ENCODE measurements at regions of chr7 and their contacts with region 1.

Region 1: GRCh38 chr7:142459551-142459963 is 201.7 kb upstream of the PRSS58 start:
- DNase-seq: peak; percentile 90
- ATAC-seq: peak; percentile 50
- H3K4me3 ChIP-seq: no peak overlapping the region
- H3K27ac ChIP-seq: no peak overlapping the region
- H3K4me1 ChIP-seq: peaks cover 22% of the 10 kb centered on the region
- H3K27me3 ChIP-seq: no peaks in the 10 kb centered on the region
- CTCF ChIP-seq: peak; percentile 78
- POLR2A ChIP-seq: no peak
- RAD21 ChIP-seq: peak; percentile 78

Region 2: GRCh38 chr7:142088022-142088714 is 371.4 kb before region 1 on chr7:
- CTCF ChIA-PET with region 1: no interaction called
- POLR2A ChIA-PET with region 1: no interaction called
- dilution Hi-C with region 1: no loop called
- in situ Hi-C with region 1: no loop called
- intact Hi-C with region 1: no loop called
- DNase-seq: no peak
- ATAC-seq: no peak
- H3K4me3 ChIP-seq: no peak overlapping the region
- H3K27ac ChIP-seq: no peak overlapping the region
- H3K4me1 ChIP-seq: no peaks in the 10 kb centered on the region
- H3K27me3 ChIP-seq: no peaks in the 10 kb centered on the region
- CTCF ChIP-seq: no peak
- POLR2A ChIP-seq: no peak
- RAD21 ChIP-seq: no peak

Region 3: DNA sequence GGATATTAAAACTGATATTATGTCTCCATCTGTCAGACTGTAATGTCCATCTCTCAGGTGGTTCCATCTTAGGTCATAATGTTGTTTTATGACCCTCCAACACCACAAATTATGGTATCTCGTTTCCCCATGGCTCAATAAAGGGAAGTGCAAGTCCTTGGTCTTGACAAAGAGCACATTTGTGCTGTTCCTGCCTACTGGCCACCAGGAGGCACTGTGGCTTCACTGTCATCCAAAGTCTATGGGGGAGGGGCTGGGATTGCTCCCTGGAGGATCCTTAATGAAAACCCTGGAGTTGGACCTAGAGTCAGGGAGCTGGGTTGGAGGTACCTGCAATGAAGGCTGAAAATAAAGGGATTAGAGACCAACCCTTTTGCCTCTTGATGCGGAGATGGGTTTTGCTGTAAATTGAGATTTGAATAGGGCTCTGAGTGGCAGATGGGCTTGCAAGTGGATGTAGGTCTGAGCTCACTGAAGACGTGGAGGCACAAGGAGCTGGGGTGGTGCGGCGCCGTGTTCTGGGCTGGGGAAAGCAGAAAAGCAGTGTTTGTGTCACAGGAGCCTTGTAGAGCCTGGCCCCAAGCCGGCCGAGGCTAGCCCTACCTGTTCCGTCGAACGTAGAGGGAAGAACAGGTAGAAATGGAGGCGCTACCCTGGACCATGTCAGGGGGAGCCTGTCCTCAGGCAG is 21.2 kb before region 1 on chr7:
- CTCF ChIA-PET with region 1: interaction called, 16 read pairs
- POLR2A ChIA-PET with region 1: interaction called, 5 read pairs
- dilution Hi-C with region 1: no loop called
- in situ Hi-C with region 1: no loop called
- intact Hi-C with region 1: no loop called
- DNase-seq: peak; percentile 64
- ATAC-seq: peak; percentile 33; the same call in 1 of the 2 replicates
- H3K4me3 ChIP-seq: no peak overlapping the region
- H3K27ac ChIP-seq: no peak overlapping the region
- H3K4me1 ChIP-seq: peaks cover 12% of the 10 kb centered on the region
- H3K27me3 ChIP-seq: no peaks in the 10 kb centered on the region
- CTCF ChIP-seq: peak; percentile 84
- POLR2A ChIP-seq: no peak
- RAD21 ChIP-seq: peak; percentile 73

Region 4: DNA sequence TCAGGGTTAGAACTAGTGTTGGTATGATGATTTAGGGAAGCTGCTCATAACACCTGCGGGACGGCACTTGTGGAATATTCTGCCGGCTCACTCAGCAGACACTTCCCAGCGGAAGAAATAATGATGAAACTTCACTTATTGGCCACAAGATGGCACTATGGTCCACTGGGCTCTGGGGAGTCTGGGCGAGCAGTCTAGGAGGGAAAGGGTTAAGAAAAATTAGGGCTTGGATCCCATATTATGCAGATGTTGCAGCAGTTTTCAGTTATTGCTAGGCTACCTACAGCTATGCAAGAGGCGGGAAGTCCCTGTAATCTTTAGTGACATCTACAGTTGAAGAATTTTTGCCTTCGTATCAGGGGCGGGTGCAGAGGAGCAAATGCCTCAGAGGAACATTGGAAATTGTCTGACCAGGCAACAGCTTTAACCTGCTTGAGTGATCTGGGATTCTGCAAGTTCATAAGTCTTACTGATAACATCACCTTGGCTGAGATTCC is 37.0 kb after region 1 on chr7:
- CTCF ChIA-PET with region 1: interaction called, 13 read pairs
- POLR2A ChIA-PET with region 1: no interaction called
- dilution Hi-C with region 1: no loop called
- in situ Hi-C with region 1: no loop called
- intact Hi-C with region 1: no loop called
- DNase-seq: peak; percentile 54
- ATAC-seq: peak; percentile 50
- H3K4me3 ChIP-seq: no peak overlapping the region
- H3K27ac ChIP-seq: no peak overlapping the region
- H3K4me1 ChIP-seq: peaks cover 8% of the 10 kb centered on the region
- H3K27me3 ChIP-seq: 0 out of 2 replicates have a peak, but pooled peaks cover 1% of the 10 kb centered on the region
- CTCF ChIP-seq: peak; percentile 68
- POLR2A ChIP-seq: no peak
- RAD21 ChIP-seq: peak; percentile 53

Region 5: DNA sequence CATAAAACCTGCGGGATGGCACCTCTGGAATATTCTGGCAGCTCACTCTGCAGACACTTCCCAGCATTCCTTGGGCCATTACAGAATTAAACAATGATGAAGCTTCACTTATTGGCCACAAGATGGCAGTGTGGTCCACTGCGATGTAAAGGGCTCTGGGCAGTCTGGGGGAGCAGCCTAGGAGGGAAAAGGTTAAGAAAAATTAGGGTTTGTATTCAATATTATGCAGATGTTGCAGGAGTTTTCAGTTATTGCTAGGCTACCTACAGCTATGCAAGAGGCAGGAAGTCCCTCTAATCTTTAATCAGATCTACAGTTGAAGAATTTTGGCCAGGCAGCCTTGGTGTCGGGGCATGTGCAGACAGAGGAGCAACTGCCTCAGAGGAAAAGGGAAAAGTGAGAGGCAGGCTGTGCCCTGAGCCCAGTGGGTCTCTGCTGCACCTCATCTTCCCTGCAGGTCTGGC is 56.5 kb after region 1 on chr7:
- CTCF ChIA-PET with region 1: interaction called, 7 read pairs
- POLR2A ChIA-PET with region 1: no interaction called
- dilution Hi-C with region 1: no loop called
- in situ Hi-C with region 1: no loop called
- intact Hi-C with region 1: loop called (anchors 5 kb)
- DNase-seq: peak; percentile 72
- ATAC-seq: peak; percentile 93
- H3K4me3 ChIP-seq: no peak overlapping the region
- H3K27ac ChIP-seq: no peak overlapping the region
- H3K4me1 ChIP-seq: no peaks in the 10 kb centered on the region
- H3K27me3 ChIP-seq: peaks cover 4% of the 10 kb centered on the region
- CTCF ChIP-seq: peak; percentile 86
- POLR2A ChIP-seq: no peak
- RAD21 ChIP-seq: peak; percentile 75

Measured in IMR-90 (cell line).